OCI-LY7 (cell line): ENCODE measurements at regions of chr22 and their contacts with region 1.

Region 1: DNA sequence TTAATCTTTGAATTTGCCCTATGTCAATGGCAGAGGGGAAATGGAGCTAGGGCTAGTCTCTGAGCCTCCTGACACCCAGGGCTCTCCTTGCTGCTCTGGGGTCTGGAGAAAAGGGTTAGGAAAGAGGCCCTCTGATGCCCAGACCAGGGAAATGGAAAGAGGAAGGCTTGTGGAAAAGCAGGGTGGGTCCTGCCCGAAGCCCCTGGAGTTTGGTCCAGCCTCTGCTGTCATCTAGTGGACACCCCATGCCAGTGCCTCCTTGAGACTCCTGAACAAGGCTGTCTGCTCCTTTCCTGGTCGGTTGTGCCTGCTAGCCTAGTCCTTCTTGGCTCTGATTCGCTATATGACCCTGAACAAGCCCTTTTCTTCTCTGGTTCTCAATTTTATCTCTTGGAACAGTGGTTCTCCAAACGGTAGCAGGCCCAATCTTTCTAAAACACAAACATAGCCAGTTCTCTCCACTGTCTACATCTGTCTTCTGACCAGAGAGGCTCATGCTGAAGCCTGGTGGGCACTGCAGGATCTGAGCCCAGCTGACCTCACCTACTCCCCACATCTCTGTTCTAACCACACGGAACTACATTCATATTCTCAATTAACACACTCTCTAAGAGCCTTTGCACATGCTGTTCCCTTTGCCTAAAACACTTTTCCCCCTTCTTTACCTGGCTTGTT is 8.8 kb upstream of the PLA2G3 start:
- DNase-seq: peak; percentile 61
- H3K4me3 ChIP-seq: no peak overlapping the region
- H3K27ac ChIP-seq: no peak overlapping the region
- H3K4me1 ChIP-seq: no peaks in the 10 kb centered on the region
- CTCF ChIP-seq: peak; percentile 85

Region 2: DNA sequence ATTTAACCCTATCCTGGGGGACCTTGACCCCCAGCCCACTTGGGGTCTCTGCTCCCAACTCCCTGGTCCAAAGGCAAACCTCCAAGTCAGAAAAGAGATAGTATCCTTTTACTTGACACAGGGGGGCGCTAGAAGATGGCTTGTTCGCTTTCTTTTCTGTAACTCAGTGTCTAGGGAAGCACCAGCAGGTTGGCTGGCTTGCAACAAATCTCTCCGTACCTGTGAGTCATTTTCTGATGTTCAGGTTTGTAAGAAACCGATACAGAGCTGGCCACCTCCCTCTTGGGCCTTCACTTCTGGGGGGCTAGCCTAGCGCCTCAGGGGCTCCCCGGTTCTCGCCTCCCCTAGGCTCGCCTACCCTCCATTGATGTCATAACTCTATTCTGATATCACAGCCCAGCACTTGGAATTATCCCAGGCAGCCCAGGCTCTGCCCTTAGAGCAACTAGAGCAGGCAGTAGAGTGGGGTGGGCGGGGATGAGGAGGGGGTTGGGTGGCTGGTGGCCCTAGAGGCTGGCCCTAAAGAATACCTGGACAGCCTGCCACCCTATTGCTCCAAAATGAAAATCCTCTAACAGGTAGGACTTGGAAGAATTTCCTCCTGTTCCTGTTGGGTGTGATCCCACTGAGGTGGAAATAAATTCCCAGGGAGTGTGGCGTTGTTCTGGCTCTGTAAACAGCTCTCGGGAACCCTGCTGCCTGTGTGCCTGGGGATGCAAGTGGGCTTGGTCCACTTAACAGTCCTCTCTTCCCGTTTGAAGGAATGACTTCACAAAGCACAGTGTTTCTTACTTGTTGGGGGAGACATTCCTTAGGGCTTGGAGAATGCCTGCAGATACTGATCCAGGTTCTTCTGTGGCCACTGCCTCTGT is 385.0 kb before region 1 on chr22:
- CTCF ChIA-PET with region 1: no interaction called
- POLR2A ChIA-PET with region 1: no interaction called
- intact Hi-C with region 1: loop called (anchors 5 kb)
- DNase-seq: peak; percentile 64
- H3K4me3 ChIP-seq: no peak overlapping the region
- H3K27ac ChIP-seq: no peak overlapping the region
- H3K4me1 ChIP-seq: no peaks in the 10 kb centered on the region
- CTCF ChIP-seq: peak; percentile 80

Region 3: GRCh38 chr22:30947816-30948454 is 201.2 kb before region 1 on chr22:
- CTCF ChIA-PET with region 1: no interaction called
- POLR2A ChIA-PET with region 1: no interaction called
- intact Hi-C with region 1: loop called (anchors 5 kb)
- DNase-seq: peak; percentile 44
- H3K4me3 ChIP-seq: no peak overlapping the region
- H3K27ac ChIP-seq: no peak overlapping the region
- H3K4me1 ChIP-seq: no peaks in the 10 kb centered on the region
- CTCF ChIP-seq: peak; percentile 80

Region 4: DNA sequence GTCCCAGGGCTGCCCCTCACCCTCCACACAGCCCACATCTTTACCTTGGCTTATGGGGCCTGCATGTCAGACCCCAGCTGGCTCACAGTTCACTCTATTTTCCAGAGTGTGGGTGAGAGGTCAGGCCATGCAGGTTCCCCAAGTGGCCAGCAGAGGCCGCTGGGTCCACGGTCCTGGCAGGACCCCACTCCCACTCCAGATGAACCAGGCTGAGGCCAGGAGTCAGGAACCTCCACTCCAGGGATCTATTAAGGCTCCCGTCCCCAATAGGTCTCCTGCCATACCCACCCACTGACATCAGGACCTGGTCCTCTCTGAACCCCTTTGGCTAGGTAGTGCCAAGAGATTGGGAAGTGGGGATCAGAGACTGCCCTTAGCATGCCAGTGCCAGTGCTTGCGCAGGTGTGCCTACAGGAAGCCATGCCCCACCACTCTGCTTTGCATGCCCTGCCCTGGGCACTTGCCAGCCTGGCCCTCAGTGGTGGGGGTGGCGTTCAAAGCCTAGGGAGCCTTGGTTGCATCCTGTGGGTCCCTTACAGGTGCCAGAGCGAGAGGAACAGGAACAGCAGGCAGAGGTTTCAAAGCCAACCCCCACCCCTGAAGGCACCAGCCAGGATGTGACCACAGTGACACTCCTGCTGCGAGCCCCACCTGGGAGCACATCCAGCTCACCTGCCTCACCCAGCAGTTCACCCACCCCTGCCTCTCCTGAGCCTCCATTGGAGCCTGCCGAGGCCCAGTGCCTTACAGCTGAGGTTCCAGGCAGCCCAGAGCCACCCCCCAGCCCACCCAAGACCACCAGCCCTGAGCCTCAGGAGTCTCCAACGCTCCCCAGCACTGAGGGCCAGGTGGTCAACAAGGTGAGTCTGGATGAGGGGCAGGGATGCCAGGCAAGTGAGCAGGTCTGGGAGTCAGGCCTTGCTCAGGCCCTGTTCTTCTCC is 59.7 kb before region 1 on chr22:
- CTCF ChIA-PET with region 1: no interaction called
- POLR2A ChIA-PET with region 1: no interaction called
- intact Hi-C with region 1: loop called (anchors 1 kb)
- DNase-seq: peak; percentile 64
- H3K4me3 ChIP-seq: no peak overlapping the region
- H3K27ac ChIP-seq: no peak overlapping the region
- H3K4me1 ChIP-seq: peaks cover 19% of the 10 kb centered on the region
- CTCF ChIP-seq: peak; percentile 89

Region 5: DNA sequence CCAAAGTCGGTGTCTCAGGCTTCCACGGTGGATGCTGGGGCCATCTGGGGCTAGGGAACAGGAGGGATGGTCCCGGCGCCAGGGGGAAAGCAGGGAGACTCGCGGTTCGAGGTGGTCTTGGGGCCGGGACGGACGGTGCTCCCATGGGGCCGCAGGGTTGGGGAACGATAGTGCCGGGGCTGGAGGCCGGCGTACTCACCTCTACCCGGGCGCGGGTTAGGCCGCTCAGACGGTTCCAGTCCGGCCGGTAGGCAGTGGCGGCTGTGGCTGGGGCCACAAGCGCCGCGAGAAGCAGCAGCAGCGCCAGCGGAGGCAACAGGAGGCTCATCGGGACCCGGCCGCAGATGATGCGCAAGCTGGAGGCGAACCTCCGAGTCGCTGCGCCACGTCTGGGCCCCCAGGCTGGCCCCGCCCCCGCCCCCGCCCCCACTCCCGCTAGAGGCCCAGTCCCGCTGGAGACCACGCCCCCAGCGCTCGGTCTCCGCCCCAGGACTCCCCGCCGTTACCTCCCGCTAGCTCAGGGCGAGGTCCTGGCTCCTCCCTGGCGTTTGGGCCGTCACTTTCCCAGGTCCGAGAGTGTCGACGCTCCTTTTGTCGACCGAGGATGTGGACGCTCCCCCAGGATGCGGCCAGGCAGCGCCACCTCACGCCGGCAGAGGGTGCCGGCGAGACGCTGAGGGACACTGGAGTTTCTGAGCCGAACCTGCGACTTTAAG is 41.8 kb before region 1 on chr22 and contains the start of gene SELENOM:
- CTCF ChIA-PET with region 1: no interaction called
- POLR2A ChIA-PET with region 1: interaction called, 4 read pairs
- intact Hi-C with region 1: loop called (anchors 5 kb)
- DNase-seq: peak; percentile 84
- H3K4me3 ChIP-seq: peak within 1 kb of the TSS; percentile 64
- H3K27ac ChIP-seq: no peak within 1 kb of the TSS
- H3K4me1 ChIP-seq: peaks cover 5% of the 10 kb centered on the region
- CTCF ChIP-seq: peak; percentile 85
- total RNA-seq, gene SELENOM: 1.4 TPM in 1 of 2 replicates, not detected in the other

Region 6: GRCh38 chr22:31127181-31127772 is 21.8 kb before region 1 on chr22:
- CTCF ChIA-PET with region 1: no interaction called
- POLR2A ChIA-PET with region 1: no interaction called
- intact Hi-C with region 1: no loop called
- DNase-seq: no peak
- H3K4me3 ChIP-seq: no peak overlapping the region
- H3K27ac ChIP-seq: no peak overlapping the region
- H3K4me1 ChIP-seq: peaks cover 8% of the 10 kb centered on the region
- CTCF ChIP-seq: no peak

Region 7: GRCh38 chr22:31173386-31174145 is 24.5 kb after region 1 on chr22:
- CTCF ChIA-PET with region 1: no interaction called
- POLR2A ChIA-PET with region 1: no interaction called
- intact Hi-C with region 1: no loop called
- DNase-seq: no peak
- H3K4me3 ChIP-seq: no peak overlapping the region
- H3K27ac ChIP-seq: no peak overlapping the region
- H3K4me1 ChIP-seq: peaks cover 8% of the 10 kb centered on the region
- CTCF ChIP-seq: no peak